Activated T-helper 1 cell treated with anti-CD3 and anti-CD28 coated beads, Interleukin-12 subunit alpha, Interleukin-12 subunit beta, Interleukin-2, Interleukin-4 antibody, amounts not matched to agents 30 ng/mL and 10 ng/mL and 1 ng/mL, durations not matched to agents 14 hours and 24 hours and 36 hours (primary cell): ENCODE measurements at regions of chr5 and their contacts with region 1.

Region 1: GRCh38 chr5:151093476-151093889 is 12.6 kb upstream of the TNIP1 start:
- DNase-seq: no peak
- H3K4me3 Mint-ChIP-seq: peak overlapping the region; percentile 67
- H3K27ac Mint-ChIP-seq: peak overlapping the region; percentile 82
- H3K4me1 Mint-ChIP-seq: peaks cover 80% of the 10 kb centered on the region
- H3K27me3 Mint-ChIP-seq: no peaks in the 10 kb centered on the region

Region 2: GRCh38 chr5:150789943-150790611 is 303.4 kb before region 1 on chr5:
- intact Hi-C with region 1: loop called (anchors 5 kb)
- DNase-seq: peak; percentile 63
- H3K4me3 Mint-ChIP-seq: peak overlapping the region; percentile 78
- H3K27ac Mint-ChIP-seq: peak overlapping the region; percentile 87
- H3K4me1 Mint-ChIP-seq: peaks cover 59% of the 10 kb centered on the region
- H3K27me3 Mint-ChIP-seq: no peaks in the 10 kb centered on the region

Region 3: DNA sequence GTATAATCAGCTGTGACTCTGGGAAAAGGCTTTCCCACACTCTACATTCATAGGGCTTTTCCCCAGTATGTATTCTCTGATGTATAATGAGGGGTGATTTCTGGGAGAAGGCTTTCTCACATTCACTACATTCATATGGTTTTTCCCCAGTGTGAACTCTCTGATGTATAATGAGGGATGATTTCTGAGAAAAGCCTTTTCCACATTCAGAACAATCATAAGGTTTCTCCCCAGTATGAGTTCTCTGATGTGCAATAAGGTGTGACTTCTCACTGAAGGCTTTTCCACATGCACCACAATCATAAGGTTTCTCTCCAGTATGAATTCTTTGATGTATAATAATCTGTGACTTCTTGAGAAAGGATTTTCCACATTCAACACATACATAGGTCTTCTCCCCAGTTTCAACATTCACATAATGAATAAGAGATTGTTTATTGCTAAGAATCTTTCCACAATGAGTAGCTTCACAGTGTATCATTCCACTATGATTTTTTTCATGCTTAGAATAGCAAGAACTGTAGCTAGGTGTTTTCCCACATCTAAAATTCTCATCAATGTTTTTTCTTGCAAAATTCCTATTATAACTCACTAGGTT is 162.0 kb before region 1 on chr5:
- intact Hi-C with region 1: no loop called
- DNase-seq: no peak
- H3K4me3 Mint-ChIP-seq: no peak overlapping the region
- H3K27ac Mint-ChIP-seq: no peak overlapping the region
- H3K4me1 Mint-ChIP-seq: no peaks in the 10 kb centered on the region
- H3K27me3 Mint-ChIP-seq: no peaks in the 10 kb centered on the region

Region 4: GRCh38 chr5:151051066-151051930 is 42.2 kb before region 1 on chr5:
- intact Hi-C with region 1: loop called (anchors 5 kb)
- DNase-seq: peak; percentile 40
- H3K4me3 Mint-ChIP-seq: no peak overlapping the region
- H3K27ac Mint-ChIP-seq: peak overlapping the region; percentile 44
- H3K4me1 Mint-ChIP-seq: peaks cover 34% of the 10 kb centered on the region
- H3K27me3 Mint-ChIP-seq: no peaks in the 10 kb centered on the region

Region 5: GRCh38 chr5:151068433-151069197 is 24.9 kb before region 1 on chr5:
- intact Hi-C with region 1: loop called (anchors 2 kb)
- DNase-seq: no peak
- H3K4me3 Mint-ChIP-seq: peak overlapping the region; percentile 49
- H3K27ac Mint-ChIP-seq: peak overlapping the region; percentile 88
- H3K4me1 Mint-ChIP-seq: peaks cover 88% of the 10 kb centered on the region
- H3K27me3 Mint-ChIP-seq: no peaks in the 10 kb centered on the region